Ovary (tissue), 10 donors: ENCODE measurements at regions of chr5 and their contacts with region 1.

Region 1: DNA sequence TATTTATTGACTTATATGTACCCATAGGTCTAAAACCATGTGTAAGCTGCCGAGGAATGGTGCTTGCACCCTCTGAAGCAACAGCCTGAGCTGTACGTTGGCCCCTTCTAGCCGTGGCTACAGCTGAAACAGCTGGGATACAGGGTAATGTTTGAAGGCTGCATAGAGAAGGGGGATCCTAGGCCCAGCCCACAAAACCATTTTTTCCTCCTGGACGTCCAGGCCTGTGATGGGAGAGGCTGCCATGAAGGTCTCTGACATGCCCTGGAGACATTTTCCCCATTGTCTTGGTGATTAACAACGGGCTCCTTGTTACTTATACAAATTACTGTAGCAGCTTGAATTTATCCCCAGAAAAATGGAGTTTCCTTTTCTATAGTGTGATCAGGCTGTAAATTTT is 244.7 kb downstream of the COMMD10 start:
- DNase-seq: no peak
- H3K4me3 ChIP-seq: no peak overlapping the region
- H3K27ac ChIP-seq: no peak overlapping the region
- H3K4me1 ChIP-seq: no peaks in the 10 kb centered on the region
- H3K27me3 ChIP-seq: no peaks in the 10 kb centered on the region
- CTCF ChIP-seq: no peak
- EP300 ChIP-seq: no peak
- POLR2A ChIP-seq: no peak

Region 2: GRCh38 chr5:116308391-116308790 is 21.1 kb before region 1 on chr5:
- intact Hi-C with region 1: loop called in 1 of 4 experiments (anchors 1 kb)
- DNase-seq: no peak
- H3K4me3 ChIP-seq: no peak overlapping the region
- H3K27ac ChIP-seq: no peak overlapping the region
- H3K4me1 ChIP-seq: no peaks in the 10 kb centered on the region
- H3K27me3 ChIP-seq: no peaks in the 10 kb centered on the region
- CTCF ChIP-seq: no peak
- EP300 ChIP-seq: no peak
- POLR2A ChIP-seq: no peak

Region 3: GRCh38 chr5:116378007-116378776 is 48.7 kb after region 1 on chr5:
- intact Hi-C with region 1: no loop called
- DNase-seq: peak in 2 of 5 donors; percentile 13 to 30
- H3K4me3 ChIP-seq: no peak overlapping the region
- H3K27ac ChIP-seq: no peak overlapping the region
- H3K4me1 ChIP-seq: no peaks in the 10 kb centered on the region
- H3K27me3 ChIP-seq: no peaks in the 10 kb centered on the region
- CTCF ChIP-seq: no peak
- EP300 ChIP-seq: no peak
- POLR2A ChIP-seq: no peak